Activated T-helper 2 cell treated with anti-CD3 and anti-CD28 coated beads, Interferon-gamma antibody, Interleukin-2, Interleukin-4, amounts not matched to agents 10 μg/mL and 5 μg/mL and 100 μg/mL, durations not matched to agents 14 hours and 24 hours and 36 hours (primary cell): ENCODE measurements at regions of chr13 and their contacts with region 1.

Region 1: GRCh38 chr13:40517486-40518480 is 148.7 kb downstream of the FOXO1 start:
- DNase-seq: no peak
- H3K4me3 Mint-ChIP-seq: peak overlapping the region; percentile 42
- H3K27ac Mint-ChIP-seq: peak overlapping the region; percentile 81
- H3K4me1 Mint-ChIP-seq: peaks cover 57% of the 10 kb centered on the region
- H3K27me3 Mint-ChIP-seq: no peaks in the 10 kb centered on the region

Region 2: GRCh38 chr13:40221460-40222201 is 296.2 kb before region 1 on chr13:
- intact Hi-C with region 1: loop called (anchors 10 kb)
- DNase-seq: peak; percentile 17
- H3K4me3 Mint-ChIP-seq: peak overlapping the region; percentile 1
- H3K27ac Mint-ChIP-seq: peak overlapping the region; percentile 83
- H3K4me1 Mint-ChIP-seq: peaks cover 38% of the 10 kb centered on the region
- H3K27me3 Mint-ChIP-seq: peaks cover 2% of the 10 kb centered on the region

Region 3: GRCh38 chr13:40388617-40389016 is 129.2 kb before region 1 on chr13:
- intact Hi-C with region 1: loop called (anchors 10 kb)
- DNase-seq: peak; percentile 83
- H3K4me3 Mint-ChIP-seq: peak overlapping the region; percentile 80
- H3K27ac Mint-ChIP-seq: peak overlapping the region; percentile 98
- H3K4me1 Mint-ChIP-seq: peaks cover 38% of the 10 kb centered on the region
- H3K27me3 Mint-ChIP-seq: no peaks in the 10 kb centered on the region

Region 4: DNA sequence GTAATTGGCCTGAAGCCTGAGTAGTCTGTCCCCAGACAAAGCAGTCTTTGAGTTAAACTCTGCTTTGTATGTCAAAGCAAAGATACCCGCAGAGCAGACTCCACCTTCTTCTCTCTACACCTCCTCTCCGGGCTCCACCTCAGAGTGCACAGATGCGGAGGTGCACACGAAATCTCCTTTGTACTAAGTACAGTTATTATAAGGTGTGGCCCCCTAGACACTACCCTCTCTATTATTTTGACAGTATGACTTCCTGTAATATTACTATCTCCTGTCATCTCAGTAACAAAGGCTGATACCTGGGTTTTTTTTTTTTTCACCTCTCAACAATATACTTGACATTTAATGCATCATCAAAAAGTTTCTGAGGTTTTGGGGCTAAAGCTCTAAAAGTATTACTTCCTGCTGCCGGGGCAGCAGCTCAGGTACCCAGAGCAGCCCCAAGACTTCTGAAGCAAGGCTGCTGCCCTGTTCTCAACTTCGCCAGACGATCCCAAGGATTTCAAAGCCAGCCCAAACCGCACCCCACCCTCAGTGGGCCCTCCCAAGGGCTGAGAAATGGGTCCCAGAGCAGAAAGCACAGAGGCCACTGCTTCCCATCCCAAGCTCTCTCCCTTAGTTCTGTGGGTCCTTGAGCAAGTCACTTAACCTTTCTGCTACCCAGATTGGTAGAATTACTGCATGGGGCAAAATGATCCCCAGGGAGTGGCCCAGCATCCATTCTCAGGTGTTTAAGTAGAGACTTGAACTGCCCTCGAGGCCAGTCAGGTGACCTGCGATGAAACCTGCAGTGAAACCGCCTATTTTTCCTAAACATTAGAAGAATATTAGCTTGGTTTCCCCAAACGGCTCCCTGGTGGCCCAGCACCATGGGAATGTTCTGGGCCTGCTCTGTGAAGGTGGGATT is 31.9 kb before region 1 on chr13:
- intact Hi-C with region 1: loop called (anchors 2 kb)
- DNase-seq: peak; percentile 64
- H3K4me3 Mint-ChIP-seq: peak overlapping the region; percentile 24
- H3K27ac Mint-ChIP-seq: peak overlapping the region; percentile 86
- H3K4me1 Mint-ChIP-seq: peaks cover 55% of the 10 kb centered on the region
- H3K27me3 Mint-ChIP-seq: no peaks in the 10 kb centered on the region

Region 5: DNA sequence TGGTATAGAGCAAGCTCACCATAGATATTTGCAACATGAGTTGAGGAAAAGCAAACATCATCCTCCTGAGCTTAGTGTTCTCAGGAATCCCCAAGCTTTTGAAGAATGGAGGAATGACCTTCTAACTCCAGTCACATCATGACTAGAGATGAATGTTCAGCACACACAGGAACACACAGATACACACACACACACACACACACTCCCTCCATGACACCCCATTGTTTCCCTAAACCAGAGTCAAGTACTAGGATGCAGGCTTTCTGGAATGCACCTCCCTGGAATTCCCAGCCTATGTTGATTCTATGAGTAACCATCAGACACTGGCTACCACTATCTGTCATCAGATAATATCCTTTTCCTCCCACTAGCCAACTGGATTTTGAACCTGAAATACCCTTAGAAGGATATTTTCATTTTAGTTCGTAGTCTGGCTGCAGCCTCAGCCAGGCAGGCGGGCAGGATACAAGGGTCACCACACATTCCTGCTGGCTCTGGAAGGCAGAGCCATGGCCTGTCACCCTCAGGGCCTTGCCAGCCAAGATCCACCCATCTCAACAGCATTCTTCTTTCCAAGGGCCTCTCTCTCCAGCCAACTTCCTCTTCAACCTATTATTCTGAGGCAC is 13.7 kb before region 1 on chr13:
- intact Hi-C with region 1: no loop called
- DNase-seq: no peak
- H3K4me3 Mint-ChIP-seq: no peak overlapping the region
- H3K27ac Mint-ChIP-seq: no peak overlapping the region
- H3K4me1 Mint-ChIP-seq: peaks cover 2% of the 10 kb centered on the region
- H3K27me3 Mint-ChIP-seq: no peaks in the 10 kb centered on the region

Region 6: DNA sequence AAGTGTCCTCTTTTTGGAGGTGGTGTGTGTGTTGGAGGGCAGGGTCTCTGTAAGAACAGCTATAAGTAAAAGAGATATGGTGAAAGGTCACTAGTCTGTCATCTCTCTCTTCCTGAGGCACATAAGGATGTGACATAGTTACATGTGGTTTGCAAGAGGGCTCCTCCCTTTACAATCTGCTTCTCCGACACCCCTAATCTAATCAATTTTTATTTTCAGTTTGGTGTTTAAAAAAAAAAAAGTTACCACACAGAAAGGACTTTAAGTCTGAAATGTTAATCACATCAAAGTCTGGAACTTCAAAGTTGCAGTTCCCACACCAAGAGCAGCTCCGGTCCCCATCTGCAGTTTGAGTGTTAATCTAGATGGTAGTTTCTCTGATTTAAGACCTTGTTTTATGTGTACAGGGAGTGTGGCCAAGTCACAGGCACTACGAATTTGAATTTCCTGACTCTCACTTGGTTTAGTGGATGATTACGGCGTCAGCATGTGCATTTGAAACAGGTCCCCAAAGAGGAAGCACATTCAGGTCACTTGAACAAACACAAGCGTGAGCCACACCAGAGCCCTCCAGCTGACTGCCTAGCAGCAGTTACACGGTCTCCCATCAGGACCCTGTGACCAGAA is 95.5 kb after region 1 on chr13:
- intact Hi-C with region 1: loop called (anchors 1 kb)
- DNase-seq: peak; percentile 55
- H3K4me3 Mint-ChIP-seq: peak overlapping the region; percentile 80
- H3K27ac Mint-ChIP-seq: peak overlapping the region; percentile 95
- H3K4me1 Mint-ChIP-seq: peaks cover 64% of the 10 kb centered on the region
- H3K27me3 Mint-ChIP-seq: no peaks in the 10 kb centered on the region